Caco-2 (cell line): ENCODE measurements at regions of chr4 and their contacts with region 1.

Region 1: GRCh38 chr4:11021333-11021732 is 336.8 kb upstream of the CLNK start:
- DNase-seq: no peak
- H3K4me3 ChIP-seq: no peak overlapping the region
- H3K4me3 Mint-ChIP-seq: no peak overlapping the region
- H3K27ac Mint-ChIP-seq: no peak overlapping the region
- H3K4me1 ChIP-seq: peaks cover 8% of the 10 kb centered on the region
- H3K4me1 Mint-ChIP-seq: peaks cover 19% of the 10 kb centered on the region
- H3K27me3 ChIP-seq: no peaks in the 10 kb centered on the region
- H3K27me3 Mint-ChIP-seq: no peaks in the 10 kb centered on the region
- CTCF ChIP-seq: no peak

Region 2: DNA sequence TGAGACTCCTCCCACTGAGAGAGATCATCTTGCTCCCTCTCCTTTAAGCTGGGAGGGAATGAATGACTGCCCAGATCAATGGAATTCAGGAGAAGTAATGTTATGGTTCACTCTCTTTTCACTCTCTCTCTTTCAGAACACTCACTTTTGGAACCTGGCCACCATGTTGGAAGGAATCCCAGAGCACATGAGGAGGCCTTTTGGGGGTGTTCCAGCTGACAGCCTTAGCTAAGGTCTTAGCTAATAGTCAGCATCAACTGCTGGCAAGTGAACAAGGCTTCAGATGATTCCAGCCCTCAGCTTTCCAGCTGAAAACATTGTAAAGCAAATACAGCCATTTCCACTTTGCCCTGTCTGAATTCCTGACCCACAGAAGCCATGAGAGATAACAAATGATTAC is 212.7 kb before region 1 on chr4:
- CTCF ChIA-PET with region 1: no interaction called
- POLR2A ChIA-PET with region 1: no interaction called
- intact Hi-C with region 1: no loop called
- DNase-seq: no peak
- H3K4me3 ChIP-seq: no peak overlapping the region
- H3K4me3 Mint-ChIP-seq: no peak overlapping the region
- H3K27ac Mint-ChIP-seq: no peak overlapping the region
- H3K4me1 ChIP-seq: no peaks in the 10 kb centered on the region
- H3K4me1 Mint-ChIP-seq: no peaks in the 10 kb centered on the region
- H3K27me3 ChIP-seq: no peaks in the 10 kb centered on the region
- H3K27me3 Mint-ChIP-seq: no peaks in the 10 kb centered on the region
- CTCF ChIP-seq: no peak

Region 3: GRCh38 chr4:11073621-11074051 is 52.3 kb after region 1 on chr4:
- CTCF ChIA-PET with region 1: no interaction called
- POLR2A ChIA-PET with region 1: no interaction called
- intact Hi-C with region 1: no loop called
- DNase-seq: no peak
- H3K4me3 ChIP-seq: no peak overlapping the region
- H3K4me3 Mint-ChIP-seq: no peak overlapping the region
- H3K27ac Mint-ChIP-seq: no peak overlapping the region
- H3K4me1 ChIP-seq: no peaks in the 10 kb centered on the region
- H3K4me1 Mint-ChIP-seq: no peaks in the 10 kb centered on the region
- H3K27me3 ChIP-seq: no peaks in the 10 kb centered on the region
- H3K27me3 Mint-ChIP-seq: no peaks in the 10 kb centered on the region
- CTCF ChIP-seq: no peak

Region 4: DNA sequence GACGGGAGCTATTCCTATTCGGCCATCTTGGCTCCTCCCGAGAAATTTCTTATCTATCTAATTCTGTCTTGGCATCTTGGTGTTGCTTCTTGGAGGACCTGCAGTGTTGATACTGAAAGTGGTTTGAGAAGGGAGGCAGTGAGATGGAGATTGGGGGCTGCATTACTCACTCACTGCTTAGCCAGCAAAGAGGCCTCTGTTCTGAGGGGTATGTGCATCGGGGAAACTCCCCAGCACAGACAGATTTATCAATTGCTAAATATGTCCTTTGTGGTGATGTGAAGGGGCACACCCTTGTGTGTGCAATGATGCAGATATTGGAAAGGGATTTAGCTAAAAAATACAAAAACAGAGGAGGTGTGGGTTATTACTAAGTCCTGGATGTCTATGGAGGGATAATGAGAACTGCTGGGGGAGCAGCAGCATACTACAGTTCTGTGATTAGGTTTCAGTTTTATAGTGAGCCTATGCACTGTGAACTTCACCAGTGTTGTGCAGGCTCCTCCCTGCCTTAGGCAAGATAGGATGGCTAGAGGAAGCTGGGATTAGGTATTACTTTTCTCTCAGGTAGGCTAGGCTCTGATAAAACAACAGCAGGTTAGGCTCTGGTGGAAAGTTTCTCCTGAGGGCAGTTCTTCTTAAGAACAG is 128.4 kb after region 1 on chr4:
- CTCF ChIA-PET with region 1: no interaction called
- POLR2A ChIA-PET with region 1: no interaction called
- intact Hi-C with region 1: loop called (anchors 5 kb)
- DNase-seq: no peak
- H3K4me3 ChIP-seq: no peak overlapping the region
- H3K4me3 Mint-ChIP-seq: no peak overlapping the region
- H3K27ac Mint-ChIP-seq: no peak overlapping the region
- H3K4me1 ChIP-seq: peaks cover 24% of the 10 kb centered on the region
- H3K4me1 Mint-ChIP-seq: peaks cover 13% of the 10 kb centered on the region
- H3K27me3 ChIP-seq: no peaks in the 10 kb centered on the region
- H3K27me3 Mint-ChIP-seq: no peaks in the 10 kb centered on the region
- CTCF ChIP-seq: no peak